Adrenal gland (tissue), 19 donors: ENCODE measurements at regions of chr16 and their contacts with region 1.

Region 1: DNA sequence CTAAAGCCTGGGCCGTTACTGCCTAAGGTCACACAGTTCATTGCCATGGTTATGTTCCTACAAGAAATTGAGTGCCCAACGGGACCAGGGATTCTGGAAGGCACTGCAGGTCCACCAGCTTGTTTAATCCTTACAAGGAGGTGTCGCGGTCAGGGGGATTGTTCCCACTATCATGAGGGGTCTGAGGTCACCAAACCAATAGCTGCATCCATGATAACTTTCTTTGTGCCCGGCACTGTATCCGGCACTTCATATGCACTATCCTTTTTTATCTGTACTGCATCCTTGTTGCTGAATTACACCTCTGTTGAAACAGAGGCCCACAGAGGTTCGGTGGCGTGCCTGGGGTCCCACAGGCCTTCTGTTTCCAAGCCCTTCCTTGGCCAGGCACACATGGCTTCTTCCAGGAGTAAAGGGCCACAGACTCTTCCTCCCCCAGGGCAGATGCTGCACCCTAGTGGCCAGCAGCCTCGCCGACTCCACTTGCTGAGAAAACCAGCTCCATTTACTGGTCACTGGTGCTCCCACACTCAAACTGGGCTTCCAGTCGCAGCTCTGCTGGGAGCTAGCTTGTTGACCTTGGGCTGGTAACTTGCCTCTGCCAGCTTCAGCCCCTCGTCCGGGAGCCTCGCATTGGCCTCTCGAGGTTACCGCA is 82.0 kb upstream of the PLCG2 start:
- DNase-seq: peak; percentile 54 to 78 (median 63)
- H3K4me3 ChIP-seq: no peak overlapping the region
- H3K27ac ChIP-seq: peak overlapping the region in 1 of 5 donors; percentile 11
- H3K4me1 ChIP-seq: peaks cover 0 to 17% of the 10 kb centered on the region in 2 donors
- H3K27me3 ChIP-seq: no peaks in the 10 kb centered on the region
- CTCF ChIP-seq: peak; percentile 53 to 73 (median 66)
- POLR2A ChIP-seq: no peak

Region 2: GRCh38 chr16:81403616-81404373 is 293.3 kb before region 1 on chr16:
- intact Hi-C with region 1: loop called in 1 of 2 experiments (anchors 10 kb)
- DNase-seq: peak; percentile 77 to 94 (median 89)
- H3K4me3 ChIP-seq: peak overlapping the region in 1 of 4 donors; percentile 34
- H3K27ac ChIP-seq: no peak overlapping the region
- H3K4me1 ChIP-seq: peaks cover 4% of the 10 kb centered on the region in 2 donors
- H3K27me3 ChIP-seq: no peaks in the 10 kb centered on the region
- CTCF ChIP-seq: peak; percentile 94 to 97 (median 95)
- POLR2A ChIP-seq: no peak

Region 3: DNA sequence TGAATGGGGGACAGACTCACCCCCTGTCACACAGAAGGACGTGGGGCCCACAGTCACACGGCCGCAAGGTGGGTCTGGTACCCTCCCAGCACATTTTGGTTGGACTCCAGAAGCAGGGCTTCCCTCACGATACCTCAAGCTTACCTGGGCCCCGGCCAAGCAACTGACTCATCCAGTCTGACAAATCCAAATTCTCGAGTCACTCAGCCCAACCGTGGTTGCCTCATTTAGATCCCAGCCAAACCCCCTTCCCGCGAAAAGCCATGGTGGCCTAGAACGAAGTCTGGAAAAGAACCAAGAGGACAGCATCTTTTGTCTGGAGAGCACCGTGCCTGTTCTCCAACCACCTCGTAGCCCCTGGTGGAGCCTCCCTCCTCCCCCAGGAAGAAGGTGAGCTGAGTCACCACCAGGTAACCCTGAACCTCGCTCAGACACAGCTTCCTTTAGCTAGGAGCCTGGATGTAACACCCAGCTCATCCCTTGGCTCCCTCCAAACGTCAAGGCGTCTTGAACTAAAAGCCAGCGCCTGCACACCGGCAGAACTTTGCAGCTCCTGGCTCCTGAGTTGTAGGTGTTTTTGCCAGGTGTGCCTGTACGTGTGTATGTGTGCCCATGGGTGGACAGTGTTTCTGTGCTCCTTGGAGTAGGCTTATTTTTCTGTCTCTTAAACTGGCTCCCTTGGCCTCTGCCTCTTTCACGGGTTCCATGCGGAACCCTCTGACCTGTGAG is 173.5 kb before region 1 on chr16:
- intact Hi-C with region 1: no loop called
- DNase-seq: peak; percentile 79 to 94 (median 93)
- H3K4me3 ChIP-seq: no peak overlapping the region
- H3K27ac ChIP-seq: peak overlapping the region in 3 of 5 donors; percentile 21 to 44 (median 36)
- H3K4me1 ChIP-seq: peaks cover 0 to 34% of the 10 kb centered on the region in 2 donors
- H3K27me3 ChIP-seq: no peaks in the 10 kb centered on the region
- CTCF ChIP-seq: no peak
- POLR2A ChIP-seq: no peak